PC-3 (cell line): ENCODE measurements at regions of chr1 and their contacts with region 1.

Region 1: DNA sequence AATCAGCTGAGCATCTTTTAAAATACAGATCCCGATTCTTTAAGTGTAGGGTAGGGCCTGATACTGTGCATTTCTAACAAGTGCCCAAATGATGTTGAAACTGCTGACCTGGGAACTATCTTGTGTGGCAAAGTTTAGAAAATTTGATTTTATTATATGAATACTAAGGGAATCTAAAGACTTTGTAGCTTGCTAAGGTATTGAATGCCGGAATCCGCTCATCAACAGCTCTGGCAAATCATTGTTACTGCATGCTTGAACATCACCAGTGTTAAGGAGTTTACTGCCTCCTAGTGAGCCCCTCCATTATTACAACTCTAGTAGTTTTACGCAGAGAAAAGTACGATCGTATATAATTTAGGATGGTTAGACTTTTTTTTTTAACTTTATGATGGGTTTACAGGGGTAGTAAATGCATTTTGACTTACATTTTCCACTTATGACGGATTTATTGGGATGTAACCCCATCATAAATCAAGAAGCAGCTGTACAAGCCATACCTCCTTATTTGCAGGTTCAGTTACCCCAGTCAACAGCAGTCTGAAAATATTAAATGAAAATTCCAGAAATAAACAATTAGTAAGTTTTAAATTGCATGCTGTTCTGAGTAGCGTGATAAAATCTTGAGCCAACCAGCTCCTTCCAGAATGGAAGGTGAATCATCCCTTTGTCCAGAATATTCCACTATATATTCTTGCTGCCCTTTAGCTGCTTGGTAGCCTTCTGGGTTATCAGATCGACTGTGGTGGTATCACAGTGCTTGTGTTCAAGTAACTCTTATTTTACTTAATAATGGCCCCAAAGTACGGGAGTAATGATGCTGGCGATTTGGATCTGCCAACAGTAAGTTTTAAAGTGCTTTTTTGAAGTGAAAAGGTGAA is 892 bp downstream of the TYW3 start:
- DNase-seq: peak; percentile 81
- ATAC-seq: peak; percentile 30
- H3K4me3 ChIP-seq: peak overlapping the region; percentile 81
- H3K27ac ChIP-seq: peak overlapping the region; percentile 81
- H3K4me1 ChIP-seq: peaks cover 34% of the 10 kb centered on the region
- H3K27me3 ChIP-seq: no peaks in the 10 kb centered on the region
- CTCF ChIP-seq: peak; percentile 84

Region 2: GRCh38 chr1:74363220-74363619 is 370.6 kb before region 1 on chr1:
- CTCF ChIA-PET with region 1: no interaction called
- POLR2A ChIA-PET with region 1: no interaction called
- intact Hi-C with region 1: no loop called
- DNase-seq: no peak
- ATAC-seq: no peak
- H3K4me3 ChIP-seq: no peak overlapping the region
- H3K27ac ChIP-seq: no peak overlapping the region
- H3K4me1 ChIP-seq: peaks cover 11% of the 10 kb centered on the region; the same call in 1 of the 2 replicates
- H3K27me3 ChIP-seq: no peaks in the 10 kb centered on the region
- CTCF ChIP-seq: no peak

Region 3: GRCh38 chr1:74652597-74653139 is 81.2 kb before region 1 on chr1:
- CTCF ChIA-PET with region 1: interaction called, 5 read pairs
- POLR2A ChIA-PET with region 1: no interaction called
- intact Hi-C with region 1: loop called (anchors 2 kb)
- DNase-seq: peak; percentile 99
- ATAC-seq: peak; percentile 90
- H3K4me3 ChIP-seq: peak overlapping the region; percentile 18; the same call in 1 of the 2 replicates
- H3K27ac ChIP-seq: peak overlapping the region; percentile 96
- H3K4me1 ChIP-seq: peaks cover 46% of the 10 kb centered on the region
- H3K27me3 ChIP-seq: no peaks in the 10 kb centered on the region
- CTCF ChIP-seq: no peak

Region 4: DNA sequence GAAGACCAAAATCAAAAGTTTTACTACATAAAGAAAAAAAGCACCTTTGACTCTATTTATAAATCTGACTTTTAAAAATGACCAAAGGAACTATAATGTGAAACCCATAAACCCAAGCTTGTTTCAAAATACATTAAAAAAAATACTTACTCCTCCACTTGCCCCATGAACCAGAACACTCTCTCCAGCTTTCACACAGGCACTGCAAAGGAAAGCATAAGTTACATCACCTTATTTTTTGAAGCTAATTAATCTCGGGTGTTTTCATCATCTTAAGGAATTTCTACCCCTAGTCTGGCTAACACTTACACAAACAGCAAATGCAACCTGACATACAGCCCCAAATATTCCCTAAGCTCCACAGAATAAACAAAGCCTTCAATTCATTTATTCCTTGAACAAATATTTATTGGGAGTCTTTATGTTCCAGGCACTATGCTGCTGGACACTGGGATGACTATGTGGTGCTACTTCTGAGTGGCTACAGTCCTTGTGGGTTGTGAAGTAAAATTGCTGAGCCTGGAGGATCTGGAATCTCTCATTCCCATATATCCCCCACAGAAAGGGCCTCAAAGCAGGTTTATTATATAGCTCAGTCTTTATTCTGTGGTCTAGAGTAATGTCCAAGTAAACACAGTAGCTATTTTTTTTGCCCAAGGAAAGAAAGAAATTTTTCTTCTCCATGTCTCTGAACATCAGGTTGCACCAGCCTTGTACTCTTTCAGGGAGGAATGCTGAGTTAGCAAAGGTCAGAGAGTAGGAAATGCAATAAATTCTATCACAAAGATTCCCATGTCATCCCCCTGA is 19.2 kb before region 1 on chr1:
- CTCF ChIA-PET with region 1: no interaction called
- POLR2A ChIA-PET with region 1: interaction called, 13 read pairs
- intact Hi-C with region 1: no loop called
- DNase-seq: no peak
- ATAC-seq: no peak; the same call in 1 of the 2 replicates
- H3K4me3 ChIP-seq: no peak overlapping the region
- H3K27ac ChIP-seq: no peak overlapping the region
- H3K4me1 ChIP-seq: no peaks in the 10 kb centered on the region
- H3K27me3 ChIP-seq: no peaks in the 10 kb centered on the region
- CTCF ChIP-seq: no peak

Region 5: GRCh38 chr1:74811436-74812179 is 77.8 kb after region 1 on chr1:
- CTCF ChIA-PET with region 1: no interaction called
- POLR2A ChIA-PET with region 1: no interaction called
- intact Hi-C with region 1: no loop called
- DNase-seq: no peak
- ATAC-seq: no peak
- H3K4me3 ChIP-seq: no peak overlapping the region
- H3K27ac ChIP-seq: no peak overlapping the region
- H3K4me1 ChIP-seq: no peaks in the 10 kb centered on the region
- H3K27me3 ChIP-seq: peaks cover 16% of the 10 kb centered on the region
- CTCF ChIP-seq: no peak